ENCODE measurements at regions of chr22 and their contacts with region 1.

Region 1: DNA sequence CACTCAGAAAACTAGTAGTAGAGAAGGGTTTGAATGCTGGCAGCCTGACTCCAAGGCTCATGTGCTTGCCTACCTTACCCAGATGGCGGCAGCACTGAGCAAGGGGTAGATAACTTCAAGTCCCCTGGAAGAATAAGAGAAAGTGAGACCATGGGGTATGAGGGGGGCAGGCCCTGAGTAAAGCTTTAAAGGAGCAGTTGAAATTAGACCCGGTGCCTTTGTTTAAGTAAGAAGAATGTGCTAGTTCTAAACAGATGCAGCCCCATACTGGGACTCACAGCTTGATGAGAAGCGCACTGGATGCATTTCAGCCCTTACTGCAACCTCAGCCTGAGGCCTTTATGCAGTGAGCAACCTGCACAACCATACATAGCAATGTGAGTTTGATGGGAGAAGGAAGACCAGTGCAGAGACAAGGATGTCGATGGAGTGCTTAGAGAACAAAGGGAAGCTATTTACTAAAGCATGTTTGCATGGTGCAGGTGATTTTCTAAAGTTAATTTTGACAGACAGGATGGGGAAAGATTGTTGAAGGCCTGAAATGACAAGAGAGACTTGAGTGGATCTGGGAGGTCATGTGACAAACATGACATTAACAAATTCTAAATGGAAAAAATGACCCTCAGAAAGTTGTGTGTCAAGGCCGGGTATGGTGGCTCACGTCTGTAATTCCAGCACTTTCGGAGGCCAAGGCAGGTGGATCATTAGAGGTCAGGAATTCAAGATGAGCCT is 27.1 kb upstream of the TMA7B start:
- DNase-seq: peak; percentile 87
- ATAC-seq: peak; percentile 59
- H3K4me3 Mint-ChIP-seq: peak overlapping the region; percentile 72
- H3K27ac Mint-ChIP-seq: peak overlapping the region; percentile 94
- H3K4me1 Mint-ChIP-seq: peaks cover 55% of the 10 kb centered on the region
- H3K27me3 Mint-ChIP-seq: no peaks in the 10 kb centered on the region

Region 2: GRCh38 chr22:39908737-39909136 is 24.3 kb before region 1 on chr22:
- CTCF ChIA-PET with region 1: interaction called, 171 read pairs
- DNase-seq: peak; percentile 74
- ATAC-seq: peak; percentile 40
- H3K4me3 Mint-ChIP-seq: peak overlapping the region; percentile 90
- H3K27ac Mint-ChIP-seq: peak overlapping the region; percentile 91
- H3K4me1 Mint-ChIP-seq: peaks cover 61% of the 10 kb centered on the region
- H3K27me3 Mint-ChIP-seq: no peaks in the 10 kb centered on the region

Region 3: GRCh38 chr22:39917776-39918495 is 15.1 kb before region 1 on chr22:
- CTCF ChIA-PET with region 1: interaction called, 171 read pairs
- DNase-seq: no peak
- ATAC-seq: no peak
- H3K4me3 Mint-ChIP-seq: peak overlapping the region; percentile 90
- H3K27ac Mint-ChIP-seq: peak overlapping the region; percentile 94
- H3K4me1 Mint-ChIP-seq: peaks cover 84% of the 10 kb centered on the region
- H3K27me3 Mint-ChIP-seq: no peaks in the 10 kb centered on the region

Region 4: GRCh38 chr22:39943337-39943736 is 10.3 kb after region 1 on chr22:
- CTCF ChIA-PET with region 1: interaction called, 28 read pairs
- DNase-seq: peak; percentile 62
- ATAC-seq: peak; percentile 17
- H3K4me3 Mint-ChIP-seq: peak overlapping the region; percentile 43
- H3K27ac Mint-ChIP-seq: peak overlapping the region; percentile 88
- H3K4me1 Mint-ChIP-seq: peaks cover 88% of the 10 kb centered on the region
- H3K27me3 Mint-ChIP-seq: no peaks in the 10 kb centered on the region

Region 5: GRCh38 chr22:39956932-39957664 is 24.0 kb after region 1 on chr22:
- CTCF ChIA-PET with region 1: interaction called, 15 read pairs
- DNase-seq: no peak
- ATAC-seq: no peak
- H3K4me3 Mint-ChIP-seq: no peak overlapping the region
- H3K27ac Mint-ChIP-seq: peak overlapping the region; percentile 30
- H3K4me1 Mint-ChIP-seq: peaks cover 91% of the 10 kb centered on the region
- H3K27me3 Mint-ChIP-seq: no peaks in the 10 kb centered on the region

Region 6: DNA sequence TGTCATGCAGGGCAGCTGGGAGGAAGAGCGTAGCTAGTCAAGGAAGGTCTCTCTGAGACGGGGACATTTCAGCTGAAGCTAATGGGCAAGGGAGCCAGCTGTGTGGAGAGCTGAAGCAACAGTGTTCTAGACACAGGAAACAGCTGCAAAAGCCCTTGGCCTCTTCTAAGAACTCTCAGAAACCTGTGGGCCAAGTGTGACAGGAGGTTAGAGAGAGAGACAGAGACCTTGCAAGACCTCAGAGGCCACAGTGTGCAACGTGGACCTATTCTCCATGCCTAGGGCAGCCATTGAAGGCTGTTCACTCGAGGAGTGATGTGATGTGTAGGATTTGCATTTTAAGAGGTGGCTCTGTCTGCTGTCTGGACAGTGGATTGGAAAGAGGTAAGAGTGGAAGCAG is 195.9 kb after region 1 on chr22:
- CTCF ChIA-PET with region 1: no interaction called
- DNase-seq: peak; percentile 87
- ATAC-seq: peak; percentile 96
- H3K4me3 Mint-ChIP-seq: peak overlapping the region; percentile 51
- H3K27ac Mint-ChIP-seq: peak overlapping the region; percentile 89
- H3K4me1 Mint-ChIP-seq: peaks cover 45% of the 10 kb centered on the region
- H3K27me3 Mint-ChIP-seq: no peaks in the 10 kb centered on the region

Measured in activated CD8-positive, alpha-beta memory T cell treated with anti-CD3 and anti-CD28 coated beads, Interleukin-2, amount 10 ng/mL, durations not matched to agents 7 days and 5 days (primary cell).